Breast epithelium (tissue), 4 donors: ENCODE measurements at regions of chr19 and their contacts with region 1.

Region 1: GRCh38 chr19:42553292-42554045 is 25.2 kb upstream of the CEACAM1 start:
- DNase-seq: no peak
- H3K4me3 ChIP-seq: no peak overlapping the region
- H3K27ac ChIP-seq: no peak overlapping the region
- H3K4me1 ChIP-seq: no peaks in the 10 kb centered on the region
- H3K27me3 ChIP-seq: no peaks in the 10 kb centered on the region
- CTCF ChIP-seq: no peak
- POLR2A ChIP-seq: no peak

Region 2: GRCh38 chr19:42325273-42325895 is 228.1 kb before region 1 on chr19 and contains the start of gene MEGF8:
- intact Hi-C with region 1: loop called (anchors 10 kb)
- DNase-seq: peak; percentile 96 to 98
- H3K4me3 ChIP-seq: peak within 1 kb of the TSS; percentile 75 to 87 (median 80)
- H3K27ac ChIP-seq: peak within 1 kb of the TSS; percentile 61 to 77
- H3K4me1 ChIP-seq: peaks cover 3 to 8% of the 10 kb centered on the region in 2 donors
- H3K27me3 ChIP-seq: peaks cover 5 to 15% of the 10 kb centered on the region in 2 donors
- CTCF ChIP-seq: peak in 1 of 3 donors; percentile 89
- POLR2A ChIP-seq: no peak
- total RNA-seq, gene MEGF8: 9.7 to 15.5 (median 10.8) TPM

Region 3: GRCh38 chr19:42512743-42513304 is 40.6 kb before region 1 on chr19:
- intact Hi-C with region 1: no loop called
- DNase-seq: no peak
- H3K4me3 ChIP-seq: no peak overlapping the region
- H3K27ac ChIP-seq: no peak overlapping the region
- H3K4me1 ChIP-seq: no peaks in the 10 kb centered on the region
- H3K27me3 ChIP-seq: no peaks in the 10 kb centered on the region
- CTCF ChIP-seq: no peak
- POLR2A ChIP-seq: no peak

Region 4: GRCh38 chr19:42589792-42590191 is 36.3 kb after region 1 on chr19:
- intact Hi-C with region 1: no loop called
- DNase-seq: no peak
- H3K4me3 ChIP-seq: no peak overlapping the region
- H3K27ac ChIP-seq: no peak overlapping the region
- H3K4me1 ChIP-seq: no peaks in the 10 kb centered on the region
- H3K27me3 ChIP-seq: no peaks in the 10 kb centered on the region
- CTCF ChIP-seq: no peak
- POLR2A ChIP-seq: no peak

Region 5: DNA sequence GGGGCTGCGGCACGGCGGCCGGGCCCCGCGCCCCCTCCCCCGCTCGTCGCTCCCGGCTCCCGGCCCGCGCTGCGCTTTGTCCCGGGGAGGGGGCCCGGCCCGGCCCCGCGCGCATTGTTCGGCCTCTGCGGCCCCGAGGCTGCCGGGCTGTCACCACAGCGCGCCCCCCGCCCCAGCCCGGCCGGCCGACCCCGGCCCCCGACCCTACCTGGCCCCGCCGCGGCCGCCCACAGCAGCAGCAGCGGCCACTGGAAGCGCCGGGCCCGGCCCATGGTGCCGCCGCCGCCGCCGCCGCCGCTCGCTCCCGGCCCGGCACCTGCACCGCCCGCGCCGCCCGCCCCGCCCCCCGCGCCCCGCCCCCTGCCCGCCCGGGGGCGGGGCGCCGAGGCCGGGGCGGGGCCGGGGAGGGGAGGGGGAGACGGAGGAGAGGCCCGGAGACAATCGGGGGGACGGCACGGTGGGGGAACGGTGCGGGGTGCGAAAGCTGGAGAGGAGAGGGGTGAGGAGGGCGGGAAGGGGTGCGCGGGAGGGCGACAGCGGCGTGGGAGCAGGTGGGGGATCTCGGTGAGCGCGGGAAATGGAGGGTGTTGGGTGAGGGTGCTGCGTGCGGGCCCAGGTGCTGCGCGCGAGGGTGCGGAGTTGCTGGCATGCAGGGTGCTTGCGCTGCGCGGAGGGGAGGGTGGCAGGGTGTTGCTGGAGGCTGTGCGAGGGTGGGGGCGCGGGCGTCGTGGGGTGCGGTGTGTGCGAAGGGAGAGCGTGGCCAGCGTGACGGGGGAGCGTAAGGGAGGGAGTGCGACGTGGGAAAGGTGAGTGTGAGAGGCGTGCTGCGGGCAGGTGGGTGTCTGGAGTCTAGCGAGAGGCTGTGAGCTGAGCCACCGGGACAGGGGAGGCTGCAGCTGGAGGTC is 1086.3 kb after region 1 on chr19 and contains the start of gene CADM4:
- intact Hi-C with region 1: no loop called
- DNase-seq: peak; percentile 27 to 54
- H3K4me3 ChIP-seq: peak within 1 kb of the TSS; percentile 40 to 77 (median 69)
- H3K27ac ChIP-seq: peak within 1 kb of the TSS; percentile 66 to 80
- H3K4me1 ChIP-seq: no peaks in the 10 kb centered on the region
- H3K27me3 ChIP-seq: no peaks in the 10 kb centered on the region
- CTCF ChIP-seq: no peak
- POLR2A ChIP-seq: no peak
- total RNA-seq, gene CADM4: 2.1 to 20.8 (median 18.0) TPM